ENCODE measurements at regions of chr19 and their contacts with region 1.

Region 1: DNA sequence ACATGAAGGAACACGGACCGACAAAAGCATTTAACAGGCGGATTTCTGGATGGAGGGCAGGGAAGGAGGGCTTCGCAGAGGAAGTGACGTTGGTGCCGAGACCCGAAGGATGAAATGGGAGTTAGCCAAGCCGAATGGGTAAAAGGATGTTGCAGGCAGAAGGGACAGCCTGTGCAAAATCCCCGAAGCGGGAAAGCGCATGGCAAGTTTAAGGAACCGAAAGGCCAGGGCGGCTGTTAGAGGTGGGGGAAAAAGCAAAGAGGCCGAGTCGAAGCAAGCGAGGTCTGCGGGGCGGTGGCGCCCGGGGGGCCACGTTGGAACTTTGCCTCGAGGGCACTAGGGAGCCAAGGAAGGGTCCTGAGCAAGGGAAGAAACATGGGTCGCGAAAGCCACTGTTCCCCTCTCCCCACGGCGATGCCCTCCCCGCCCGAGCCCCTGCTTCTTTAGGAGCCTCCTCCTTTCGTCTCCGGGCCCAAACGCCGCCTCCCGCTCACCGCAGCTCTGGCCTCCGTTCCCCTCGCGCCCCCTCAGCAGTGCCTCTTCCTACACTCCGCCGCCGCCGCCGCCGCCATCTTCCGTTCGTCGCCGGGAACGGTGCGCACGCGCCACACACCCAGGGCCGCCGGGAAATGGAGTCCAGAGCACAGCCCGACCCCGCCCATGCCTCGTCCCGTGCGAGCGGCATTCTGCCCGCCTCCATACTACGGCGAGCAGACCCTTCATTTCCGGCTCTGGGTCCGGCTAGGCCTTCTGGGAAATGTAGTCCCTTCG is at the start of gene SYMPK:
- DNase-seq: peak; percentile 97 to 99 (median 99)
- H3K4me3 ChIP-seq: peak within 1 kb of the TSS; percentile 73 to 99 (median 93)
- H3K27ac ChIP-seq: peak within 1 kb of the TSS; percentile 53 to 97 (median 91)
- H3K27me3 ChIP-seq: peaks cover 0 to 26% (median 15%) of the 10 kb centered on the region in 45 donors
- CTCF ChIP-seq: peak in 39 of 56 donors; percentile 7 to 60 (median 34)
- total RNA-seq, gene SYMPK: 65.0 to 119 (median 87.1) TPM

Region 2: DNA sequence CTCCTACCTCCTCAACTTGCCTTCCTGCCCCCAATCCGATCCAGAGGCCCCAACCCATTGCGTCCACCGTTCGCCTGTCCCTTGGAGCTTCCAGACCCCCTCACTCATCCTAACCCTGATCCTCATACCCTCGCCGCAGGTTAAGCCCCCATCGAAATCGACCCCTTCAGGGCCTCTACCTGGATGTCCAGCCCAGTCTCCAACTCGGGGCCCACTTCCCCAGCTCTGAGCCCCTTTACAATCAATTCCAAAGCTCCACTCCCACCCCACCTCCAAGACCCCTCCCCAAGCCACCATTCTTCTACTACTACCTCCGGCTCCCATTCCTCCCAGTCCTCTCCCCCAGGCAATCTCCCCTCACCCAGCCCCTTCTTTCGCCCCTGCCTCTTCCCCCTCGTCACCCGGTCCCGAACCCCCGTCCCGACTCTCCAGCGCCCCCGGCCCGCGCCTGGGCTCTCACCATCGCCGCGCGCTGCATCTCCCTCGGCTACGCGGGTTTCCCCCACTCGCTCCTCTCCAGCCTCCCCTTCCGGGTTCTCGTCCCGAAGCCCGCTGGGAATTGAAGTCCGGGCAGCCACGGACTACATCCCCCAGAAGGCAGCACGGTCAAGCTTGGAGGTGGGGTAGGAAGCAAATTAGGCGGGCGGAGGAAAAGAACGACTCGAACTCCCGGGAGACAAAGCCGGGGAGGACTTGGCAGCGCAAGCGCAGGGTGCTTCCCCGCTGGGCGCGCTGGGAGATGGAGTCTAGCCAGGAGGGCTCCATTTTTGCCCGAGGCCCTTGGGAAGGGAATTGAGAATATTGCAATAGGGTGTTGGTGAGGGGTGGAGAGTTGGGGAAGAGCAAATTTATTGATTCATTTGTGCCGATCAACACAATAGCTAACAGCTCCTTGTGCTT is 132.1 kb before region 1 on chr19 and contains the start of gene FBXO46:
- intact Hi-C with region 1: loop called in 1 of 2 experiments (anchors 5 kb)
- DNase-seq: peak; percentile 93 to 99 (median 98)
- H3K4me3 ChIP-seq: peak within 1 kb of the TSS; percentile 58 to 93 (median 79)
- H3K27ac ChIP-seq: peak within 1 kb of the TSS in 55 of 59 donors; percentile 33 to 90 (median 79)
- H3K27me3 ChIP-seq: no peaks in the 10 kb centered on the region
- CTCF ChIP-seq: peak in 24 of 56 donors; percentile 3 to 61 (median 28)
- total RNA-seq, gene FBXO46: 9.1 to 29.5 (median 17.4) TPM

Region 3: DNA sequence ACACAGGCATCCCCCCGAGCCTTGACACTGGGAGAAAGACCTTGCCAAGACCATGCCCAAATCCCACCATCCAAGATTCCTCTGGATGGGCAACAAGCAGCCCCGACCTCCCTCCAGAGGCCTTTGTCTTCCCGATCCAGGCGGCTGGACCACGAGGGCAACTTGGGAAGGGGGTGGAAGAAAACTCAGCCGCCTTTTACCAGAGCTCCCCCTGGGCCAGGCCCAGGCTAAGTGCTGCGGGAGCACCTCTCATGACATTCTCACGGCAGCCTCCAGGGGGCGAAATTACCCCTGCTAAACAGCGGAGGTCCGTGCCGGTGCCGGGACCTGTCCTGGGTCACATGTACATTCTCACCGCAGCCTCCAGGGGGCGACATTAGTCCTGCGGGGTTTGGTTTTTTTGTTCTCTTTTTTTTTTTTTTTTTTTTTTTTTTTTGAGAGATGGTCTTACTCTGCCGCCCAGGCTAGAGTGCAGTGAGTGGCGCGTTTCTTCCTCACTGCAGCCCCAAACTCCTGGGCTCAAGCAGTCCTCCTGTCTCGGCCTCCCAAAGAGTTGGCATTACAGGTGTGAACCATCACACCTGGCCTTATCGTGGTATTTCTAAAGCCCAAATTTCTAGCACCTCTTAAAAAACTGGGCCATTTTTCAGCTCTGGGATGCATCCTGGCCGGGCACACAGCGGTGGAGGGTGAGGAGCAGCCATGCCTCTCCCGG is 45.6 kb before region 1 on chr19:
- intact Hi-C with region 1: no loop called
- DNase-seq: peak; percentile 60 to 90 (median 80)
- H3K4me3 ChIP-seq: no peak overlapping the region
- H3K27ac ChIP-seq: peak overlapping the region in 3 of 59 donors; percentile 13 to 44 (median 18)
- H3K27me3 ChIP-seq: no peaks in the 10 kb centered on the region
- CTCF ChIP-seq: peak; percentile 80 to 98 (median 93)

Region 4: GRCh38 chr19:45902651-45903625 is 40.2 kb after region 1 on chr19:
- intact Hi-C with region 1: loop called (anchors 2 to 5 kb)
- DNase-seq: peak; percentile 91 to 99 (median 95)
- H3K4me3 ChIP-seq: peak overlapping the region; percentile 57 to 99 (median 85)
- H3K27ac ChIP-seq: peak overlapping the region; percentile 71 to 99 (median 94)
- H3K27me3 ChIP-seq: no peaks in the 10 kb centered on the region
- CTCF ChIP-seq: peak in 29 of 56 donors; percentile 5 to 55 (median 23)

Region 5: GRCh38 chr19:45927565-45928261 is 65.0 kb after region 1 on chr19:
- intact Hi-C with region 1: loop called in 1 of 2 experiments (anchors 1 kb)
- DNase-seq: peak; percentile 77 to 94 (median 90)
- H3K4me3 ChIP-seq: peak overlapping the region in 53 of 59 donors; percentile 1 to 58 (median 36)
- H3K27ac ChIP-seq: peak overlapping the region in 1 of 59 donors; percentile 44
- H3K27me3 ChIP-seq: no peaks in the 10 kb centered on the region
- CTCF ChIP-seq: peak in 36 of 56 donors; percentile 8 to 50 (median 28)

Region 6: GRCh38 chr19:46850228-46851203 is 987.8 kb after region 1 on chr19 and contains the start of gene AP2S1:
- intact Hi-C with region 1: loop called in 1 of 2 experiments (anchors 5 kb)
- DNase-seq: peak; percentile 93 to 99 (median 98)
- H3K4me3 ChIP-seq: peak within 1 kb of the TSS; percentile 58 to 97 (median 90)
- H3K27ac ChIP-seq: peak within 1 kb of the TSS in 57 of 59 donors; percentile 5 to 92 (median 78)
- H3K27me3 ChIP-seq: no peaks in the 10 kb centered on the region
- CTCF ChIP-seq: peak in 38 of 56 donors; percentile 7 to 62 (median 36)
- total RNA-seq, gene AP2S1: 73.1 to 190 (median 146) TPM